Gastrocnemius medialis (tissue), 4 donors: ENCODE measurements at regions of chr12 and their contacts with region 1.

Region 1: GRCh38 chr12:109899783-109900751 is at the start of gene TCHP:
- DNase-seq: peak; percentile 74 to 80
- ATAC-seq: peak; percentile 96 to 97
- H3K4me3 ChIP-seq: peak within 1 kb of the TSS; percentile 69 to 97 (median 80)
- H3K27ac ChIP-seq: peak within 1 kb of the TSS; percentile 76 to 91 (median 83)
- H3K4me1 ChIP-seq: peaks cover 10 to 15% of the 10 kb centered on the region in 2 donors
- H3K27me3 ChIP-seq: no peaks in the 10 kb centered on the region
- CTCF ChIP-seq: peak in 2 of 5 experiments; percentile 34 to 35
- POLR2A ChIP-seq: peak in 1 of 2 donors; percentile 24
- total RNA-seq, gene TCHP: 7.3 to 9.4 (median 8.0) TPM

Region 2: GRCh38 chr12:109949089-109949488 is 49.0 kb after region 1 on chr12:
- in situ Hi-C with region 1: no loop called
- intact Hi-C with region 1: loop called (anchors 2 kb)
- DNase-seq: peak in 1 of 2 donors; percentile 49
- ATAC-seq: peak; percentile 83 to 87
- H3K4me3 ChIP-seq: no peak overlapping the region
- H3K27ac ChIP-seq: peak overlapping the region; percentile 20 to 79 (median 60)
- H3K4me1 ChIP-seq: peaks cover 54 to 70% of the 10 kb centered on the region in 2 donors
- H3K27me3 ChIP-seq: no peaks in the 10 kb centered on the region
- CTCF ChIP-seq: no peak
- POLR2A ChIP-seq: no peak